KBM-7 (cell line): ENCODE measurements at regions of chr2 and their contacts with region 1.

Region 1: GRCh38 chr2:203814661-203815540 is 52.7 kb upstream of the CTLA4 start:
- DNase-seq: peak; percentile 47

Region 2: DNA sequence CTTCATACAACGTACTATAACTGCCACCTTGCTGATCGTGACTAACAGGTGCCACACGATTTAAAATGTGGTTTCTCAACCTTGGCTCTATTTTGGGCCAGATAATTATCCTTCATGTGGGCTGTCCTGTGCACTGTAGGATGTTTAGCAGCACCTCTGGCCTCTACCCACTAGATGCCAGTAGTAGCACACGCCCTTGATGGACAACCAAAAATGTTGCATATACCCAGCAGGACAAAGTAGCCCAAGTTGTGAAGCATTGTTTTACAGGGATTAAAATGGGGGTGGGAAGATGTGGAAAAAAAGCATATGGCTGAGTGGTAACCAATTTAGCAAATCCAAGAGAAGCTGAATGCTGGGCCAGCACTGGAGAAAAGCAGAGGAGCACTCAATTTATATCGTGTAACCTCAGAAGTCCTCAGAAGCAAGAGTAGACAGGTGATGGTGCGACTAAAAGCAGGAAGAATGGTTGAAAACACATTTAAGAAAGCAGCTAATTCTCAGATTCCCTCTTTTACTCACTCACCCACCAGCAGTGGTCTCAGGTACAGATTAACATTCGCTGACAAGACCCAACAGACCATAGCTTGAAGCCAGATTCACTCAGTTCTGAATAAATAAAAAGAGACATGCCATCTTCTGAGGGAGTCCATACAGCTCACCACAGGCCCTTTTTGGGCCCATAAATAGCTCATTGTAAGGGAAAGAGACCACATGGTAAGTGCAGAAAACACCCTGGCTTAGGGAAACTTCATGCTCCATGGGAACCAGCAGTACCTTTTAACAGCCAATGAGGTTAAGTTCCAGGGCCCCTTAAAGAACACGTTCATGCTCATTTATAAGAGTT is 330.4 kb before region 1 on chr2:
- in situ Hi-C with region 1: loop called (anchors 25 kb)
- DNase-seq: peak; percentile 71

Region 3: DNA sequence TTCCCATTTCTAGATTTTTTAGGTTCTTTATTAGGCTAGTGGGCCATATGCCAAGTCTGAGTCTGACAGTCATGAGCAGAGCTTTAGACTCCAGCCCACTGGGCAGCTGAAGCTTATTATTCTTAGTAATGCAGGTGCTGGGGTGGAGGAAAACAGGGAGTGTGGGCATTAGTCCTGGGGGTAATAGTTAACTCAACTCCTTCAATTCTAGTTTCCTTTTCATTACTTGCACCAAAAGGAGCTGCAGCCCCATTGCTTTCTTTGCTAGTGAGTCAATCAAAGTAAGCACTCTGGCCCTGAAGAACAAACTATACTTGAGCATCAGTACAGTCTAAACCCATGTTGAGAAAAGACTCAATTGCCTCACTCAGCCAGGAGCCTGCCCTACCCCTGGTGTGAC is 157.2 kb after region 1 on chr2:
- in situ Hi-C with region 1: no loop called
- DNase-seq: no peak